HepG2 (cell line): ENCODE measurements at regions of chr6 and their contacts with region 1.

Region 1: GRCh38 chr6:33312409-33313158 is 1.3 kb downstream of the TAPBP start:
- DNase-seq: peak; percentile 84
- ATAC-seq: peak; percentile 65
- H3K4me3 ChIP-seq: peak overlapping the region; percentile 92 to 98 (median 98)
- H3K27ac ChIP-seq: peak overlapping the region; percentile 83
- H3K4me1 ChIP-seq: peaks cover 24% of the 10 kb centered on the region
- H3K27me3 ChIP-seq: no peaks in the 10 kb centered on the region; a peak in 1 of 5 replicates
- CTCF ChIP-seq: peak; percentile 63
- EP300 ChIP-seq: peak in 1 of 2 experiments; percentile 26; a peak in 1 of 4 replicates
- POLR2A ChIP-seq: peak in 1 of 2 experiments; percentile 59; a peak in 1 of 4 replicates
- RAD21 ChIP-seq: peak; percentile 70

Region 2: GRCh38 chr6:33344701-33345697 is 32.4 kb after region 1 on chr6:
- CTCF ChIA-PET with region 1: no interaction called
- POLR2A ChIA-PET with region 1: interaction called, 4 read pairs
- in situ Hi-C with region 1: no loop called
- intact Hi-C with region 1: loop called (anchors 1 kb)
- DNase-seq: peak; percentile 69
- ATAC-seq: peak; percentile 61
- H3K4me3 ChIP-seq: 0 out of 6 replicates have a peak overlapping the region, but pooled peaks of 1 of the 3 experiments have one; percentile 6
- H3K27ac ChIP-seq: no peak overlapping the region
- H3K4me1 ChIP-seq: peaks cover 5% of the 10 kb centered on the region; the same call in 1 of the 2 replicates
- H3K27me3 ChIP-seq: peaks cover 0 to 39% of the 10 kb centered on the region in 2 experiments; a peak in 2 of 5 replicates
- CTCF ChIP-seq: peak; percentile 83
- EP300 ChIP-seq: no peak
- POLR2A ChIP-seq: no peak
- RAD21 ChIP-seq: peak; percentile 59; the same call in 1 of the 2 replicates

Region 3: GRCh38 chr6:33547499-33547898 is 234.9 kb after region 1 on chr6:
- CTCF ChIA-PET with region 1: no interaction called
- POLR2A ChIA-PET with region 1: no interaction called
- in situ Hi-C with region 1: no loop called
- intact Hi-C with region 1: no loop called
- DNase-seq: no peak
- ATAC-seq: no peak
- H3K4me3 ChIP-seq: no peak overlapping the region
- H3K27ac ChIP-seq: no peak overlapping the region
- H3K4me1 ChIP-seq: peaks cover 27% of the 10 kb centered on the region
- H3K27me3 ChIP-seq: no peaks in the 10 kb centered on the region; a peak in 1 of 5 replicates
- CTCF ChIP-seq: no peak
- EP300 ChIP-seq: no peak
- POLR2A ChIP-seq: no peak
- RAD21 ChIP-seq: no peak